ENCODE measurements at regions of chr3 and their contacts with region 1.

Region 1: DNA sequence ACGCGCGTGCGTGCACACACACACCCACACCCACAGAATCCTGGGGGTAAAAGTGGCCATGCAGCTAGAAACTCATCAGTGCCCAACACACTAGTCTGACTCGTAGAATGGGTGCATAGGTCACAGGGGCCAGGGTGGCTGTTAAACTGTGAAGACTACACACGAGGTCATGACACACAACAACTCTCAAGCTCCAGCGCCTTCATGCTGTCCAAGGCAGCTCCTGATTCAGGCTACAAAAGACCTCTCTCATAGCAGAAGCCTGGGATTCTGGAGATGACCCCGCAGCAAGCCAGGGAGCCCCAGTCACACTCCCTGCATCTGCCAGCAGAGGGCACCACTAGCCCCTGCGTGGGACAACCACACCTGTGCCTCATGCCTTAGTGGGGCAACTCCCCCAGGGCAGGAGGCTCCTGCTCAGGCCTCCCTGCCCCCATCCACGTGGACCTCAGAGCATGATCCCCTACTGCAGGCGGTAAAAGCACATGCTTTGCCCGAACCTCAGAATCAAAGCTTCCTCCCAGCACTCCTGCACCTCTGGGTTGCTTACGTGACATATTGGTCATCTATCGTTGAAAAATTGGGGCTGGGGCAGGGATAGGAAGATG is 93.1 kb downstream of the LRIG1 start:
- DNase-seq: peak; percentile 91
- H3K4me3 ChIP-seq: no peak overlapping the region; a peak in 1 of 4 replicates
- H3K27ac ChIP-seq: no peak overlapping the region
- H3K4me1 ChIP-seq: peaks cover 0 to 5% of the 10 kb centered on the region in 2 experiments; a peak in 2 of 4 replicates
- H3K27me3 ChIP-seq: no peaks in the 10 kb centered on the region
- CTCF ChIP-seq: peak; percentile 89
- EP300 ChIP-seq: no peak
- RAD21 ChIP-seq: peak; percentile 81

Region 2: GRCh38 chr3:66276705-66277274 is 130.9 kb before region 1 on chr3:
- CTCF ChIA-PET with region 1: interaction called, 24 read pairs
- POLR2A ChIA-PET with region 1: no interaction called
- DNase-seq: peak; percentile 46
- H3K4me3 ChIP-seq: no peak overlapping the region
- H3K27ac ChIP-seq: no peak overlapping the region
- H3K4me1 ChIP-seq: no peaks in the 10 kb centered on the region
- H3K27me3 ChIP-seq: no peaks in the 10 kb centered on the region
- CTCF ChIP-seq: peak; percentile 83
- EP300 ChIP-seq: no peak
- RAD21 ChIP-seq: peak; percentile 91

Region 3: GRCh38 chr3:66378256-66378823 is 29.4 kb before region 1 on chr3:
- CTCF ChIA-PET with region 1: interaction called, 16 read pairs
- POLR2A ChIA-PET with region 1: no interaction called
- DNase-seq: peak; percentile 60
- H3K4me3 ChIP-seq: no peak overlapping the region
- H3K27ac ChIP-seq: no peak overlapping the region; a peak in 1 of 4 replicates
- H3K4me1 ChIP-seq: peaks cover 0 to 10% of the 10 kb centered on the region in 2 experiments; a peak in 1 of 4 replicates
- H3K27me3 ChIP-seq: no peaks in the 10 kb centered on the region
- CTCF ChIP-seq: peak; percentile 68
- EP300 ChIP-seq: no peak
- RAD21 ChIP-seq: peak; percentile 49

Region 4: DNA sequence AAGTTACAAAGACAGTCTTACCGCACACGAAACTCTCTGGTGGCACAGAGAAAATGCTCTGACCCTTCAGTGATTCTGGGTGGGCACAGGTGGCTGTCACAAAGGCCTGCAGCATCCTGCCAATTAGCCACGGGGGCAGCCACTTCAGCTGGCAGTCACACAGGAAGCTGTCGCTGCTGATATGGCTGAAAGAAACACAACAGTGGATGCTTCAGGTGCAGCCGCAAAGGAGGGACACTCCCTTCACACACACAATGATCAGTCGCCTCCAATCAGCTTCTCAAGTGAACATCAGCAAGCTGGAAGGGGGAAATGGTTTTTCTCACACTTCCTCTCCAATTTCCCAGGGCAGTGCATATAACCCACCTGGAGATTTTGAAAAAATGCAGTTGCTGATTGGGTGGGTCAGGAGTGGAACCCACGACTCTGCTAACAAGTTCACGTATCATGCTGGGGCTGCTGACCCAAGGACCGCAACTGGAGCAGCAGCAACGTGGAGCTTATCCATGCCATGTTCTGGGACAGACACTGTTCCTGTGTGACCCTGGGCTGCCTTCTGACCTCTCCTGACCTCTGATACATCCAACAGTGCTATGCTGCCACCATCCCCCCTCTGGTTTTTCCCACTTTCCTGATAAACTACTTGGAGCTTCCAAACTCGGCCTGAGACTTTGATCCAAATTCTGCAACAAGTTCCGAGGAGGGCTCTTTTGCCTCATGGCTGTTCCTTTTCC is 13.5 kb before region 1 on chr3:
- CTCF ChIA-PET with region 1: interaction called, 34 read pairs
- POLR2A ChIA-PET with region 1: interaction called, 3 read pairs
- DNase-seq: no peak
- H3K4me3 ChIP-seq: no peak overlapping the region
- H3K27ac ChIP-seq: no peak overlapping the region
- H3K4me1 ChIP-seq: peaks cover 0 to 9% of the 10 kb centered on the region in 2 experiments; a peak in 2 of 4 replicates
- H3K27me3 ChIP-seq: no peaks in the 10 kb centered on the region
- CTCF ChIP-seq: no peak
- EP300 ChIP-seq: no peak
- RAD21 ChIP-seq: no peak

Region 5: DNA sequence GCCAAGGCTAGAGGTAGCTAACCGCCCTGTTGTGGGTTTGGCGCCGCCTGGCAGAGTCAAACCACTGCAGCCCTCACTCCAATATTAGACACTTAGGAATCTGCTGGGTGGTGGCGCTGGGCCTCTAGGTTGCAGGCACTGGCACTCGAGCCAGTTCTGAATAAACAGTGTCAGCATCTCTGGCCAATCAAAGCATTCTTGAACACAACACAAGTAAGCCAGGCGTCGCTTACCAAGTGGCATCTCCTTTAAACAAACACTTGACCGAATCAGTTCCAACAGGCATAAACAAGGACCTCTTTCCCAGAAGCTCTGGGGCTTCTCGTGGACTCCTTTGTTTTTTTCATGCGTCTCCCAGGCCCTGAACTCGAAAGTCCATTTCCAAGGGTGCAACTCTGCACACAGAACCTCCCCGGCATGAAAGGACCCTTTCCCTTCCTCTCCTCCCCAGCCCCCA is 10.8 kb after region 1 on chr3:
- CTCF ChIA-PET with region 1: interaction called, 23 read pairs
- POLR2A ChIA-PET with region 1: no interaction called
- DNase-seq: no peak
- H3K4me3 ChIP-seq: no peak overlapping the region
- H3K27ac ChIP-seq: no peak overlapping the region
- H3K4me1 ChIP-seq: no peaks in the 10 kb centered on the region; a peak in 1 of 4 replicates
- H3K27me3 ChIP-seq: no peaks in the 10 kb centered on the region
- CTCF ChIP-seq: no peak
- EP300 ChIP-seq: no peak
- RAD21 ChIP-seq: no peak

Region 6: GRCh38 chr3:66816090-66816761 is 408.5 kb after region 1 on chr3:
- CTCF ChIA-PET with region 1: interaction called, 70 read pairs
- POLR2A ChIA-PET with region 1: no interaction called
- DNase-seq: peak; percentile 46
- H3K4me3 ChIP-seq: no peak overlapping the region
- H3K27ac ChIP-seq: no peak overlapping the region
- H3K4me1 ChIP-seq: no peaks in the 10 kb centered on the region
- H3K27me3 ChIP-seq: no peaks in the 10 kb centered on the region; the same call in 1 of the 2 replicates
- CTCF ChIP-seq: peak; percentile 66
- EP300 ChIP-seq: no peak
- RAD21 ChIP-seq: peak; percentile 80

Region 7: GRCh38 chr3:66822186-66823008 is 414.7 kb after region 1 on chr3:
- CTCF ChIA-PET with region 1: interaction called, 27 read pairs
- POLR2A ChIA-PET with region 1: no interaction called
- DNase-seq: peak; percentile 39
- H3K4me3 ChIP-seq: peak overlapping the region in 1 of 2 experiments; percentile 2; a peak in 1 of 4 replicates
- H3K27ac ChIP-seq: no peak overlapping the region
- H3K4me1 ChIP-seq: no peaks in the 10 kb centered on the region
- H3K27me3 ChIP-seq: no peaks in the 10 kb centered on the region
- CTCF ChIP-seq: peak; percentile 72
- EP300 ChIP-seq: no peak
- RAD21 ChIP-seq: peak; percentile 55

Measured in SK-N-SH (cell line).